HepG2 (cell line): ENCODE measurements at regions of chr1 and their contacts with region 1.

Region 1: GRCh38 chr1:53091841-53092645 is 30.0 kb downstream of the PODN start:
- DNase-seq: no peak
- ATAC-seq: no peak
- H3K4me3 ChIP-seq: no peak overlapping the region; a peak in 1 of 6 replicates
- H3K27ac ChIP-seq: no peak overlapping the region
- H3K4me1 ChIP-seq: peaks cover 80% of the 10 kb centered on the region
- H3K27me3 ChIP-seq: peaks cover 11 to 26% of the 10 kb centered on the region in 2 experiments; a peak in 4 of 5 replicates
- CTCF ChIP-seq: no peak
- EP300 ChIP-seq: no peak
- POLR2A ChIP-seq: no peak
- RAD21 ChIP-seq: no peak

Region 2: DNA sequence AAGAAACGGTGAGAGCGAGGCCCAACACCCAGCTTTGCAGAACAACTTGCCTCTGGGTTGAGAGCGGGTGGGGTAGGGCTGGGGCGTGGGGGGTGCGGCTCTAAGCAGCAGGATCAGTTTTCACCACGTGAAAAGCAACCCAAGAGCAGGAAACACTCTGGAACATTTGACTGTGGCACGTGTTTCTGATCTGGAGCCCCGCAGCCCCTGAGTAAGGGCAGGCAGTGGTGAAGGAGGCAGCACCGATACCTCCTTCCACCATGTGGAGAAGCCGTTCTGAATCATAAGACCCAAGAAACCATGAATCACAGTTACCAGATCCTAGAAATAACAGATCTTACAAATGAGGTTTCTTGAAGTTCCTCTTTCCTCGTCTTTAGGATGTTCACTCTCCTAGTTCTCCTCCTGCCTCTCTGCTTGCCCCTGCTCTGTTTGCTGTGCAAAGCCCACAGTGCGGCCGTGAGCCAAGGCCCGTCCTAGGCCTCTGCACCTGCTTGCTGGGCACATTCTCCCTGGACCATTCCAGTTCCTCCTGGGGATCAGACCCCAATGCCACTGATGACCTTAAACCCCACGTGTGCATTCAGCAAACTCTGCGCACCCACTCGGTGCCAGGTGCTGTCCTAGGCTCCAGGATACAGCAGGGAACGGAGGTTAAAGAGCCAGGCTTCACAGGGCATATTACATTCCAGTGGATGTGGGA is 18.5 kb after region 1 on chr1:
- CTCF ChIA-PET with region 1: no interaction called
- POLR2A ChIA-PET with region 1: interaction called, 18 read pairs
- in situ Hi-C with region 1: no loop called
- intact Hi-C with region 1: no loop called
- DNase-seq: no peak
- ATAC-seq: peak; percentile 12
- H3K4me3 ChIP-seq: peak overlapping the region in 1 of 3 experiments; percentile 52; a peak in 1 of 6 replicates
- H3K27ac ChIP-seq: peak overlapping the region; percentile 73
- H3K4me1 ChIP-seq: peaks cover 99% of the 10 kb centered on the region
- H3K27me3 ChIP-seq: peaks cover 6 to 66% of the 10 kb centered on the region in 2 experiments
- CTCF ChIP-seq: no peak
- EP300 ChIP-seq: no peak
- POLR2A ChIP-seq: no peak
- RAD21 ChIP-seq: no peak

Region 3: GRCh38 chr1:53259932-53260331 is 167.9 kb after region 1 on chr1:
- CTCF ChIA-PET with region 1: no interaction called
- POLR2A ChIA-PET with region 1: no interaction called
- in situ Hi-C with region 1: no loop called
- intact Hi-C with region 1: no loop called
- DNase-seq: no peak
- ATAC-seq: no peak
- H3K4me3 ChIP-seq: no peak overlapping the region
- H3K27ac ChIP-seq: no peak overlapping the region
- H3K4me1 ChIP-seq: no peaks in the 10 kb centered on the region
- H3K27me3 ChIP-seq: no peaks in the 10 kb centered on the region
- CTCF ChIP-seq: no peak
- EP300 ChIP-seq: no peak
- POLR2A ChIP-seq: no peak
- RAD21 ChIP-seq: no peak